Right ventricle myocardium inferior (tissue), 1 donor: ENCODE measurements at regions of chr1 and their contacts with region 1.

Region 1: DNA sequence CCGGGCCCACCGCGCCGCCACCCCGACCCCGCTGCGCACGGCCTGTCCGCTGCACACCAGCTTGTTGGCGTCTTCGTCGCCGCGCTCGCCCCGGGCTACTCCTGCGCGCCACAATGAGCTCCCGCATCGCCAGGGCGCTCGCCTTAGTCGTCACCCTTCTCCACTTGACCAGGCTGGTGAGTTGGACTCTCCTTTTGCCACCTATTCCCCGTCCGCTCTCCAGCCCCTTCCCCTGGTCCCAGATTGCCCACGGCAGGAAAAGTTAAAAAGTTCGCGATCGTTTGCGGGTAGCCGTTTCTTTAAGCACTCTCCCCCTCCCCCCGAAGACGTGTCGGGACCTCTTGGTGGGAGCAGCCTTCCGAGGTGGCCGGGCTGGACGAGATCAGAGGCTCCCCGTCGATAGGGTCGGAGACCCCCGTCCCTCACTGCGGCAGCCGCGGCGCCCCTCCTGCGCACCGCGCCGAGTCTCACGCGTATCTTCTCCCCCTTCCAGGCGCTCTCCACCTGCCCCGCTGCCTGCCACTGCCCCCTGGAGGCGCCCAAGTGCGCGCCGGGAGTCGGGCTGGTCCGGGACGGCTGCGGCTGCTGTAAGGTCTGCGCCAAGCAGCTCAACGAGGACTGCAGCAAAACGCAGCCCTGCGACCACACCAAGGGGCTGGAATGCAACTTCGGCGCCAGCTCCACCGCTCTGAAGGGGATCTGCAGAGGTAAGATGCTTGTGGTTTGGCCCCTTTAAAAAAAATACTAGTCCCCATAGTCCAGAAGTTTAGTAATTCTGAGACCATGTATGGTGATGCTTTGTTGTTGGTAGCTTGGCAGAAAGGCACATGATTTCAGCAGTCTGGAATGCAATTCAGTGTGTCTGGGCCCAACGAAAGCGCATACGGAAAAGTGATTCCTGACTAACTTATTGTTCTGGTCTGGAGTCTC is 576 bp downstream of the CCN1 start:
- DNase-seq: peak; percentile 85
- ATAC-seq: peak; percentile 67

Region 2: GRCh38 chr1:85307987-85308832 is 272.9 kb before region 1 on chr1:
- intact Hi-C with region 1: loop called (anchors 2 kb)
- DNase-seq: peak; percentile 88
- ATAC-seq: peak; percentile 98

Region 3: DNA sequence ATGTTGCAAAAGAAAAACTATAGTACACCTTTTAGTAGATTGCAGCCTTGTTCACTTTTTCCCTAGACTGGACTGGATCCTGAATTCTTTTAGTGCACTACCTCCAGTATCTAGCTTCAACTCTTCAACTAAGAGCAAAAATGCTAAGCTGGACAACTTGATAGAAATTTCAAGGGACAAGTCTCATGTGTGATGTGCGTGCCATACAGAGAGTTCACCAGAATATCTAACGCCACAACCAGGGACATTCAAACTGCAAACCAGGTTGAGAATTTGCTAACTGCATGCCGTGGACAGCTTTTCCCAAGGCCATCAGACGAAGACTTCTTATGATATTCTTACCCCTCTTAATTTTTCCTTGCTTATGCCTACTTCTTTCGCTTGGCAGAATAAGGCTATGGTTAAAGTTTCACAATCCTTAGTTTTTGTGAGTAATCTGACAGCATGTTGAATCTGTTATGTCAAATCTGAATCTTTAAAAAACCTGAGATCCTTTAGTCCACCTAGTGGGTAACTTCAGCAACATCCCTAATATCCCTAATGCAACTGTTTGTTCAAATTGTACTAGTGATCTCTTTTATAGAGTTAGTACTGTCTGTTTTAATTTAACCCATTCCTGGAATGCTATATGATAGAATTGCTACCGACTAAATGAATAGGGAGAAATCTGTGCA is 182.6 kb before region 1 on chr1:
- intact Hi-C with region 1: loop called (anchors 5 kb)
- DNase-seq: no peak
- ATAC-seq: peak; percentile 39

Region 4: GRCh38 chr1:85464497-85465098 is 116.5 kb before region 1 on chr1:
- intact Hi-C with region 1: loop called (anchors 2 kb)
- DNase-seq: peak; percentile 74
- ATAC-seq: peak; percentile 68

Region 5: DNA sequence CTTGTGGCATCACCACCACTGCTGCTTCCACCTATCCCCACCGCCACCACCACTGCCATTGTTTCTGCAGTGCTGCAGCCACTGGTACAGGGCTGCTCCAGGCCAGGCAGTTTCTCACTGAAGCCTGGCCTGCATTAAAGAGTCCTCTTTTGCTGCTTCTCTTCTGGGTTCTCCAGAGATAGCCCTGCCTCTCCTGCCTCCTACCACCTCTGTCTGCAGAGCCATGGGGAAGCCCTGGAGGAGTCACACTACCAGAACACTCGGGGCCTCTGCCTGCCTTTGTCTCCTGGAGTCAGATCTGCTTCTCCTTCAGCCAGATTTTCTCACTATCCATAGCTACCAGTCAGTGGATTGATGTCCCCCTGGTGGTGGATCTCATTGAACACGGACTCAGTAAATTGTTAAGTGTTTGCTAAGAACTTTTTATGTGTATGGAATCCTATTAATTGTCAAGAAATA is 78.5 kb before region 1 on chr1:
- intact Hi-C with region 1: loop called (anchors 2 kb)
- DNase-seq: no peak
- ATAC-seq: peak; percentile 85

Region 6: DNA sequence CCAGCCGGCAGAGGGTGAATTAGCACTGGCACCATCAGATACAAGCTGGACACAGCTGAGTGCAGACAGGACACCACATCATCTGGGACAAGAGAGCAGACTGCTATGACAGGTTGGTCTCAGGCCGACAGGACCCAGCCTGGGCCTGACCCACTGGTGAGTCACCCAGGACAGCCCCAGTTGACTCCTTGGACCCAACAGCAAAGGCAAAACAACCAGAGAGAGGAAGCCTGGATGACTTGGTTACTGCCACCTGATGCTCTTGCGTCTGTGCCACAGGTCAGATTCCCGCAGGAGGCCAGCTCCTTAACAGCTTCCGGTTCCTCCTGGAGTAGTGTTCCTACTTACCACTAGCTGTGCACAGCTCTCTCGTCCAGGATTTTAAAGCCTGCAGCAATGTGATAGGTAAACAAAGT is 17.9 kb after region 1 on chr1:
- intact Hi-C with region 1: no loop called
- DNase-seq: no peak
- ATAC-seq: no peak

Region 7: GRCh38 chr1:85692730-85693314 is 111.7 kb after region 1 on chr1:
- intact Hi-C with region 1: loop called (anchors 2 kb)
- DNase-seq: no peak
- ATAC-seq: no peak

Region 8: GRCh38 chr1:85707990-85708828 is 127.1 kb after region 1 on chr1 and contains the start of gene ZNHIT6:
- intact Hi-C with region 1: loop called (anchors 5 kb)
- DNase-seq: peak; percentile 92
- ATAC-seq: peak; percentile 98
- total RNA-seq, gene ZNHIT6: 8.8 TPM

Region 9: GRCh38 chr1:86470859-86471258 is 889.7 kb after region 1 on chr1:
- intact Hi-C with region 1: no loop called
- DNase-seq: no peak
- ATAC-seq: no peak

Region 10: GRCh38 chr1:86846166-86846647 is 1265.1 kb after region 1 on chr1:
- intact Hi-C with region 1: no loop called
- DNase-seq: no peak
- ATAC-seq: no peak